ENCODE measurements at regions of chr3 and their contacts with region 1.

Region 1: DNA sequence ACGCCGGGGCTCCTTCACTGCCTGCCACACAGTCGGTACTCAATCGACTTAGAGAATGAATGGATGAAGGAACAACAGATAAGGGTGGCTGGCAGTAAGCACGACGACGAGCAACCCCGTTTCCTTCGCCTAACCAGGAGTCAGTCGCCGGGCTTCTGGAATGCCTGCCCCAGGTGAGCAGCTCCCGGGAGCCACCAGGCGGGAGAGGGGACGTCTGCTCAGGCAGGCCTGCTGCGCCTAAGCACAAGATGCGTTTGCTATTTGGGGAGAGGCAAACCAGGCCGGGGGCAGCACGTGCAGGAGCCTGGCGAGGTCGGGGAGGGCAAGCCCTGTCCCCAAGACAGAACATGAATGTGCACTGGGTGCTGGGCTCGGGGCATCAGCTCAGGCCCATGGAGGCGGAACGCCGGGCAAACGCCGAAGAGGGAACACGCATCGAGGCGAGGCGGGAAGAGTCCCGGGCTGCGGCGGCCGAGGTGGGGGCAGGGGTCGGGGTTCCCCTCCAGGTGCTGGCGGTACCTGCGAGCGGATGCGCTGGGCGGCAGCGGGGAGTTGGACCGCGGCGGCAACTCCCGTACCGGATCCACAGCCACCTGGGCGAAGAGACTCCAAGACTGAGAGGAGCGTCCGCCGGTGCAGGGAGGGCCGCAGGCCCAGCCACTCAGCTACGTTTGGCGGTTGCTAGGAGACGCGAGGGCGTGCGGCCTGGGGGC is at the start of gene CFAP92:
- DNase-seq: peak; percentile 89 to 92 (median 91)
- H3K4me3 ChIP-seq: peak within 1 kb of the TSS in 1 of 2 donors; percentile 42
- H3K4me3 Mint-ChIP-seq: peak within 1 kb of the TSS; percentile 68 to 85 (median 78)
- H3K27ac ChIP-seq: peak within 1 kb of the TSS; percentile 40
- H3K27ac Mint-ChIP-seq: peak within 1 kb of the TSS; percentile 30 to 91 (median 83)
- H3K4me1 ChIP-seq: peaks cover 14% of the 10 kb centered on the region
- H3K4me1 Mint-ChIP-seq: peaks cover 5 to 28% (median 16%) of the 10 kb centered on the region in 4 donors
- H3K27me3 ChIP-seq: no peaks in the 10 kb centered on the region
- H3K27me3 Mint-ChIP-seq: no peaks in the 10 kb centered on the region
- total RNA-seq, gene CFAP92: 0.38 TPM in 1 of 2 experiments, not detected in the other

Region 2: DNA sequence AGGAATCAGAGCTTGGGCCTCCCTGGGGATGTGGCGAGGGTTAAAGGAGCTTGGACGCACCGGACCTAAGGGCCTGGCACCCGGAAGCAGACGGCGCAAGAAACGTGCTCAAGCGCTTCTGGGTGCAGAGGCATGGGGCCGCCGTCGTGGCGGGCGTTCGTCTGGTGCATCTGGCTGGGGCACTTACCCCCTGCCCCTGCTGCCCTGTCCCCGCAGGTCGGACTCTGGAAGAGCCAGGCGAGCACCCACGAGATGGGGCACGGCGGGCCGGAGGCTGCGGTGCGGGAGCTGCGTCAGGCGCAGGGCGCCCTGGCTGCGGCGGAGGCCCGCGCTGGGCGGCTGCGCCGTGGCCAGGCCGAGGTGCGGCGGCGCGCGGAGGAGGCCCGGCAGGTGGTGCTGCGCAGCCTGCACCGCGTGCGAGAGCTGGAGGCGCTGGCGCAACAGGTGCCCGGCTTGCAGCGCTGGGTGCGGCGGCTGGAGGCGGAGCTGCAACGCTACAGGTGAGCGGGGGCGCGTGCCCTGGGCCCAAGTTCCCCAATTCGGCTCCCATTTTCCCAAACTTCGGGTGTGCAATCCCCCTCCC is 10.1 kb after region 1 on chr3:
- CTCF ChIA-PET with region 1: interaction called, 9 read pairs
- POLR2A ChIA-PET with region 1: interaction called, 14 read pairs
- intact Hi-C with region 1: loop called (anchors 1 kb)
- DNase-seq: peak; percentile 50 to 64 (median 57)
- H3K4me3 ChIP-seq: no peak overlapping the region
- H3K4me3 Mint-ChIP-seq: peak overlapping the region in 4 of 8 donors; percentile 59 to 73 (median 64)
- H3K27ac ChIP-seq: no peak overlapping the region
- H3K27ac Mint-ChIP-seq: peak overlapping the region in 1 of 7 donors; percentile 47
- H3K4me1 ChIP-seq: peaks cover 36% of the 10 kb centered on the region
- H3K4me1 Mint-ChIP-seq: peaks cover 20 to 47% (median 32%) of the 10 kb centered on the region in 4 donors
- H3K27me3 ChIP-seq: peaks cover 25% of the 10 kb centered on the region
- H3K27me3 Mint-ChIP-seq: peaks cover 22 to 27% of the 10 kb centered on the region in 2 donors

Region 3: GRCh38 chr3:129633751-129634392 is 640.3 kb after region 1 on chr3:
- CTCF ChIA-PET with region 1: no interaction called
- POLR2A ChIA-PET with region 1: no interaction called
- intact Hi-C with region 1: no loop called
- DNase-seq: no peak
- H3K4me3 ChIP-seq: no peak overlapping the region
- H3K4me3 Mint-ChIP-seq: no peak overlapping the region
- H3K27ac ChIP-seq: no peak overlapping the region
- H3K27ac Mint-ChIP-seq: peak overlapping the region in 1 of 7 donors; percentile 63
- H3K4me1 ChIP-seq: no peaks in the 10 kb centered on the region
- H3K4me1 Mint-ChIP-seq: peaks cover 0 to 2% (median 0%) of the 10 kb centered on the region in 4 donors
- H3K27me3 ChIP-seq: no peaks in the 10 kb centered on the region
- H3K27me3 Mint-ChIP-seq: peaks cover 5% of the 10 kb centered on the region in 2 donors

Measured in CD4-positive, alpha-beta memory T cell (primary cell).